ENCODE measurements at regions of chr1 and their contacts with region 1.

Region 1: GRCh38 chr1:109984456-109985275 is at the start of gene AHCYL1:
- DNase-seq: peak; percentile 100

Region 2: DNA sequence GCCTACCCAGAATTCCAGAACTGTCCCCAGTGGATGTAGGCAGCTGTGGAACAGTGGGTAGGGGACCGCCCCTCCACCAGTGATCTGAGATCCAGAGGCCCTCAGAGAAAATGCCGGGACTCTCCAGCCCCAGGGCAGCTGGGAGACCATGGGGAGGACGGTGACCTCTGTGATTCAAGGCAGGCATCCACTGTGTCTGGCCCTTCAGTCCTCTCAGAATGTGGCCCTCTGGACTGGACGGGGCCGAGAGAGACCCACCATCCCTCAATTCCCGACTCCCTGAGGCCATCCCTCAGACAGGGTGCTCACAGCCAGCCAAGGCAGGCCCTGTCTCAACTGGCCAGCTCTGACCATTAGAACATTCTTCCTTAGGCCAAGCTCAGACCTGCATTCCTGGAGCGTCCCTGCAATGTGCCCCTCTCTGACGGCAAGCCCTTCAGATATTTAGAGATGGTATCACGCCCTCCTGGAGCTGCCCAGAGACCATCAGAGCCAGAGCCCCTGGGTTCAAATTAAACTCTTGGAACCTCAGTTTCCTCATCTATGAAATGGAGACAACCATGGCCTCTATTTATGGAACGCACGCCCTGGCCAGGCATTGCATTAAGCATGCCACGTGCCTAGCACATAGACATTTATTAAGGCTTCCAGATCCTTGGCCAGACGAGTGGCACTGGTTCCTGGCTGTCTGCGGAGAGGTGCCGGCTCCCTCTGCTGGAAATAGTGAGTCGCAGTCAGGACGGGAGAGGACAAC is 211.3 kb before region 1 on chr1:
- CTCF ChIA-PET with region 1: interaction called, 139 read pairs
- POLR2A ChIA-PET with region 1: interaction called, 39 read pairs
- DNase-seq: peak; percentile 91

Region 3: GRCh38 chr1:109790735-109791494 is 193.8 kb before region 1 on chr1:
- CTCF ChIA-PET with region 1: interaction called, 39 read pairs
- POLR2A ChIA-PET with region 1: interaction called, 9 read pairs
- DNase-seq: peak; percentile 69

Region 4: GRCh38 chr1:110011527-110012041 is 26.9 kb after region 1 on chr1:
- CTCF ChIA-PET with region 1: interaction called, 11 read pairs
- POLR2A ChIA-PET with region 1: interaction called, 11 read pairs
- DNase-seq: peak; percentile 68

Region 5: GRCh38 chr1:110053557-110054428 is 69.1 kb after region 1 on chr1:
- CTCF ChIA-PET with region 1: no interaction called
- POLR2A ChIA-PET with region 1: no interaction called
- DNase-seq: peak; percentile 85